ENCODE measurements at regions of chr10 and their contacts with region 1.

Region 1: GRCh38 chr10:4849555-4850242 is 23.7 kb downstream of the AKR1E2 start:
- DNase-seq: peak; percentile 59 to 87 (median 81)
- ATAC-seq: peak; percentile 92
- H3K4me3 ChIP-seq: no peak overlapping the region
- H3K4me3 Mint-ChIP-seq: no peak overlapping the region
- H3K27ac ChIP-seq: no peak overlapping the region
- H3K27ac Mint-ChIP-seq: no peak overlapping the region
- H3K4me1 ChIP-seq: no peaks in the 10 kb centered on the region
- H3K4me1 Mint-ChIP-seq: peaks cover 7% of the 10 kb centered on the region
- H3K27me3 ChIP-seq: no peaks in the 10 kb centered on the region
- H3K27me3 Mint-ChIP-seq: no peaks in the 10 kb centered on the region
- CTCF ChIP-seq: peak; percentile 98

Region 2: GRCh38 chr10:4813023-4813422 is 36.7 kb before region 1 on chr10:
- CTCF ChIA-PET with region 1: interaction called, 29 read pairs
- POLR2A ChIA-PET with region 1: interaction called, 3 read pairs
- intact Hi-C with region 1: no loop called
- DNase-seq: no peak
- ATAC-seq: no peak
- H3K4me3 ChIP-seq: no peak overlapping the region
- H3K4me3 Mint-ChIP-seq: no peak overlapping the region
- H3K27ac ChIP-seq: no peak overlapping the region
- H3K27ac Mint-ChIP-seq: no peak overlapping the region
- H3K4me1 ChIP-seq: no peaks in the 10 kb centered on the region
- H3K4me1 Mint-ChIP-seq: no peaks in the 10 kb centered on the region
- H3K27me3 ChIP-seq: peaks cover 0 to 3% of the 10 kb centered on the region in 2 experiments
- H3K27me3 Mint-ChIP-seq: peaks cover 7% of the 10 kb centered on the region
- CTCF ChIP-seq: no peak

Region 3: DNA sequence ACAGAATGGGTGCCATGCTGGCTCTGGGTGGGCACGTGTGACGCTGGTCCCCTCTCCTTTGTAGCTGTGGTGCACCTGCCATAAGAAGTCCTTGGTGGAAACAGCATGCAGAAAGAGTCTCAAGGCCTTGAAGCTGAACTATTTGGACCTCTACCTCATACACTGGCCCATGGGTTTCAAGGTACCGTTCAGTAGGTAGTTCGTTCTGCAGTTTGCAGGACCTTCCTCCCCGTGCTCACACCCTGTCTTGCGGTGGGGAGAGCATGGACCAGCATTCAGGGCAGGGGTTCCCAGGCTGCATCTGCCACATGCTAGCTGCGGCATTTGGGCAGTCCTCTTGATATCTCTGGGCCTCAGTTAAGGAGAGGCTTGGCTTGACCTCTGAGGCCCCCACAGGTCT is 16.4 kb before region 1 on chr10:
- CTCF ChIA-PET with region 1: interaction called, 70 read pairs
- POLR2A ChIA-PET with region 1: no interaction called
- intact Hi-C with region 1: no loop called
- DNase-seq: no peak
- ATAC-seq: no peak
- H3K4me3 ChIP-seq: no peak overlapping the region
- H3K4me3 Mint-ChIP-seq: no peak overlapping the region
- H3K27ac ChIP-seq: no peak overlapping the region
- H3K27ac Mint-ChIP-seq: no peak overlapping the region
- H3K4me1 ChIP-seq: peaks cover 25% of the 10 kb centered on the region
- H3K4me1 Mint-ChIP-seq: peaks cover 23% of the 10 kb centered on the region
- H3K27me3 ChIP-seq: peaks cover 0 to 2% of the 10 kb centered on the region in 2 experiments
- H3K27me3 Mint-ChIP-seq: peaks cover 10% of the 10 kb centered on the region
- CTCF ChIP-seq: no peak

Region 4: DNA sequence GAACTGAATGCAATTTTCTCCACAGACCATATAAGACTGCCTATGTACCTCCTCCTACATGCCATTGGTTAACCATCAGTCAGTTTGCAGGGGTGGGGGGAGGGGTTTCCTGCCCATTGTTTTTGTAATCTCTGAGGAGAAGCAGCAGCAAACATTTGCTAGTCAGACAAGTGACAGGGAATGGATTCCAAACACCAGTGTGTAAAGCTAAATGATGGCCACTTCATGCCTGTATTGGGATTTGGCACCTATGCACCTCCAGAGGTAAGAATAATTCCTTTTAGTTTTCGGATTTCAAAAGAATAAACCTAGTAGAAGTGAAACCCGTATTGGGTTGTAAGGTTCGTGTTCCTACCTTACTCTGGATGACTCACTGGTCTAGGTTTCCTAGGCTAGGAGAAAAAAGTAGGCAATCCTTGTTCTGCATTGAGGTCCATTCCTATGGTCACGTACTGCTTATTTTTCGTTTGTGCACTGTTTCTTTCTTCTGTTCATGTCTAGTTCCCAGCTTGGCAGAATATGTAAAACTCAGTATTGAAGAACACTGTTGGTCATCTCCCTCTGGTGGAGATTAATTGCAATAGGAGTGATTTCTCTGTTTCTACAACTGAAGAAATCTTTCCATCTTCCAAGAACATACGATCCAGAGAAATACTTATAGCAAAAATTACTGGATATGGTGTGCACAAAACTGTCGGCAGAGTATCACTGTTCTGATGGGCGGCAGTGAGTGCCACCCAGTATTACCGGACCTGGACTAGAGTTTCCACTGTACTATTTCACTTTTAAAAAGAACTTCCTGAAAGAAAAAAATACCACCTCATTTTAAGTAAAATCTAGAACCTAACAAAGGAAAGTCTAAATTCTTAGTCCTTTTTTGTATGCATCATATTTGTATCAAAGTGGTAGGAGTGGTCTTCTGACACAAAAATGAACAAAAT is 244.8 kb after region 1 on chr10 and contains the start of gene AKR1C3:
- CTCF ChIA-PET with region 1: interaction called, 9 read pairs
- POLR2A ChIA-PET with region 1: no interaction called
- intact Hi-C with region 1: loop called in 1 of 2 experiments (anchors 10 kb)
- DNase-seq: peak in 2 of 9 experiments; percentile 48 to 51
- ATAC-seq: peak; percentile 77
- H3K4me3 ChIP-seq: peak within 1 kb of the TSS; percentile 44 to 50
- H3K4me3 Mint-ChIP-seq: peak within 1 kb of the TSS; percentile 80
- H3K27ac ChIP-seq: peak within 1 kb of the TSS in 1 of 2 experiments; percentile 34
- H3K27ac Mint-ChIP-seq: peak within 1 kb of the TSS; percentile 3
- H3K4me1 ChIP-seq: peaks cover 3% of the 10 kb centered on the region
- H3K4me1 Mint-ChIP-seq: peaks cover 6% of the 10 kb centered on the region
- H3K27me3 ChIP-seq: no peaks in the 10 kb centered on the region
- H3K27me3 Mint-ChIP-seq: no peaks in the 10 kb centered on the region
- CTCF ChIP-seq: peak; percentile 48
- total RNA-seq, gene AKR1C3: 0.53 to 0.57 TPM

Region 5: DNA sequence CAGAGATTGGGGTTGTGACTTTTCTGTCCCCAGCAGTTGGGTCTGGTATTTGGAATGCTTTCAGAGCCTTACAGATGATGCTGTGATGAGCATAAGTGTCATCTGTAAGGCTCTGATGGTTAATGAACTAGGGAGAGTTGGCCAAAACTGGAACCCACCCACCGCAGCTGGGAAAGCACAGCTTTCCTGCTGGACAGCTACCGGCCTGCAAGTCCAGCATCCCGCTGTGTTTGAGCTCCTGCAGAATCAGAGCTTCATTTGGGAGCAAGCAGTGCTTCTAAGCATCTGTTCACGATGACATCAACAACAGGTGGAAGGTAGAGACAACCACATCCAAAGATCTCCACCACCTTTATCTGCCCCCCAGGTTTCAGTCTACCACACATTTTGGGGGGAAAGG is 526.8 kb after region 1 on chr10:
- CTCF ChIA-PET with region 1: interaction called, 21 read pairs
- POLR2A ChIA-PET with region 1: no interaction called
- intact Hi-C with region 1: loop called in 1 of 2 experiments (anchors 1 kb)
- DNase-seq: no peak
- ATAC-seq: no peak
- H3K4me3 ChIP-seq: no peak overlapping the region
- H3K4me3 Mint-ChIP-seq: no peak overlapping the region
- H3K27ac ChIP-seq: no peak overlapping the region
- H3K27ac Mint-ChIP-seq: no peak overlapping the region
- H3K4me1 ChIP-seq: no peaks in the 10 kb centered on the region
- H3K4me1 Mint-ChIP-seq: no peaks in the 10 kb centered on the region
- H3K27me3 ChIP-seq: peaks cover 0 to 2% of the 10 kb centered on the region in 2 experiments
- H3K27me3 Mint-ChIP-seq: no peaks in the 10 kb centered on the region
- CTCF ChIP-seq: no peak

Region 6: GRCh38 chr10:5441106-5441505 is 591.4 kb after region 1 on chr10:
- CTCF ChIA-PET with region 1: interaction called, 11 read pairs
- POLR2A ChIA-PET with region 1: no interaction called
- intact Hi-C with region 1: no loop called
- DNase-seq: no peak
- ATAC-seq: no peak
- H3K4me3 ChIP-seq: no peak overlapping the region
- H3K4me3 Mint-ChIP-seq: no peak overlapping the region
- H3K27ac ChIP-seq: no peak overlapping the region
- H3K27ac Mint-ChIP-seq: no peak overlapping the region
- H3K4me1 ChIP-seq: peaks cover 3% of the 10 kb centered on the region
- H3K4me1 Mint-ChIP-seq: peaks cover 2% of the 10 kb centered on the region
- H3K27me3 ChIP-seq: no peaks in the 10 kb centered on the region
- H3K27me3 Mint-ChIP-seq: no peaks in the 10 kb centered on the region
- CTCF ChIP-seq: no peak

Region 7: DNA sequence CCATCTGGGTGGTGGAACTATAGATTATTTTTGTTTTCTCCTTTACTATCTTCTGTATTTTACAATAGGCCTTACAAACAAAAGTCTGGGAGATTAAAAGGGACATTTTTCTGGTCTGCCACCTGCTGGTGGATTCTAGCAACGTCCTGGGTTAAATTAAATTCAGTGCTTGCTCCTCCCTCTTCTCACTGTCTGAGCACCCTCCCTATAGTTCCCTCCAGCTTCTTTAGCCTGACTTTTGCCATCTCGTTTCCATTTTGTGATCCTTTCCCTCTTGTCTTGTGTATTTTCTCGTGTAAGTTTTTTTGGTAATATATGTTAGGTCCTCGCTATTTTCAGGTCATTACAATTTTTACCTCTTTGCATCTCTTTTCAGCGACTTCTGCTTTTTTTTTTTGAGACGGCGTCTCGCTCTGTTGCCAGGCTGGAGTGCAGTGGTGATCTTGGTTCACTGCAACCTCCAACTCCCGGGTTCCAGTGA is 1023.9 kb after region 1 on chr10:
- CTCF ChIA-PET with region 1: no interaction called
- POLR2A ChIA-PET with region 1: no interaction called
- intact Hi-C with region 1: loop called in 1 of 2 experiments (anchors 5 kb)
- DNase-seq: peak; percentile 45 to 77 (median 66)
- ATAC-seq: peak; percentile 99
- H3K4me3 ChIP-seq: no peak overlapping the region
- H3K4me3 Mint-ChIP-seq: peak overlapping the region; percentile 50
- H3K27ac ChIP-seq: no peak overlapping the region
- H3K27ac Mint-ChIP-seq: no peak overlapping the region
- H3K4me1 ChIP-seq: no peaks in the 10 kb centered on the region
- H3K4me1 Mint-ChIP-seq: peaks cover 2% of the 10 kb centered on the region
- H3K27me3 ChIP-seq: no peaks in the 10 kb centered on the region
- H3K27me3 Mint-ChIP-seq: no peaks in the 10 kb centered on the region
- CTCF ChIP-seq: peak; percentile 68